CD8-positive, alpha-beta T cell (primary cell): ENCODE measurements at regions of chr5 and their contacts with region 1.

Region 1: DNA sequence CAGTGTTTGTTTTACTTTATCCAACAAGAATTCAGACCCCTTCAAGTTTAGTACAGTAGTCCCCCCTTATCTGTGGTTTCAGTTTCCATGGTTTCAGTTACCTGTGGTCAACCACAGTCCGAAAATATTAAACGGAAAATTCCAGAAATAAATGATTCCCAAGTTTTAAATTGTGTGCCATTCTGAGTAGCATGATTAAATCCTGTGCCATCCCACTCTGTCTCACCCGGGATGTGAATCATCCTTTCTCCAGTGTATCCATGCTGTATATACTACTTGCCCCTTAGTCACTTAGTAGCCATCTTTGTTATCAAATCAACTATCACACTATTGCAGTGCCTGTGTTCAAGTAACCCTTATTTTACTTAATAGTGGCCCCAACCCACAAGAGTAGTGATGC is 153.8 kb upstream of the RASA1 start:
- DNase-seq: no peak
- ATAC-seq: no peak
- H3K4me3 ChIP-seq: no peak overlapping the region
- H3K4me3 Mint-ChIP-seq: no peak overlapping the region
- H3K27ac ChIP-seq: no peak overlapping the region
- H3K27ac Mint-ChIP-seq: no peak overlapping the region
- H3K4me1 ChIP-seq: no peaks in the 10 kb centered on the region
- H3K4me1 Mint-ChIP-seq: peaks cover 2% of the 10 kb centered on the region
- H3K27me3 ChIP-seq: no peaks in the 10 kb centered on the region
- H3K27me3 Mint-ChIP-seq: no peaks in the 10 kb centered on the region
- CTCF ChIP-seq: no peak

Region 2: GRCh38 chr5:87099968-87100367 is 13.9 kb before region 1 on chr5:
- CTCF ChIA-PET with region 1: no interaction called
- POLR2A ChIA-PET with region 1: no interaction called
- intact Hi-C with region 1: loop called in 1 of 2 experiments (anchors 2 kb)
- DNase-seq: no peak
- ATAC-seq: no peak
- H3K4me3 ChIP-seq: no peak overlapping the region
- H3K4me3 Mint-ChIP-seq: no peak overlapping the region
- H3K27ac ChIP-seq: no peak overlapping the region
- H3K27ac Mint-ChIP-seq: no peak overlapping the region
- H3K4me1 ChIP-seq: peaks cover 2% of the 10 kb centered on the region
- H3K4me1 Mint-ChIP-seq: peaks cover 31% of the 10 kb centered on the region
- H3K27me3 ChIP-seq: no peaks in the 10 kb centered on the region
- H3K27me3 Mint-ChIP-seq: no peaks in the 10 kb centered on the region
- CTCF ChIP-seq: no peak